Naive thymus-derived CD4-positive, alpha-beta T cell (primary cell): ENCODE measurements at regions of chr18 and their contacts with region 1.

Region 1: DNA sequence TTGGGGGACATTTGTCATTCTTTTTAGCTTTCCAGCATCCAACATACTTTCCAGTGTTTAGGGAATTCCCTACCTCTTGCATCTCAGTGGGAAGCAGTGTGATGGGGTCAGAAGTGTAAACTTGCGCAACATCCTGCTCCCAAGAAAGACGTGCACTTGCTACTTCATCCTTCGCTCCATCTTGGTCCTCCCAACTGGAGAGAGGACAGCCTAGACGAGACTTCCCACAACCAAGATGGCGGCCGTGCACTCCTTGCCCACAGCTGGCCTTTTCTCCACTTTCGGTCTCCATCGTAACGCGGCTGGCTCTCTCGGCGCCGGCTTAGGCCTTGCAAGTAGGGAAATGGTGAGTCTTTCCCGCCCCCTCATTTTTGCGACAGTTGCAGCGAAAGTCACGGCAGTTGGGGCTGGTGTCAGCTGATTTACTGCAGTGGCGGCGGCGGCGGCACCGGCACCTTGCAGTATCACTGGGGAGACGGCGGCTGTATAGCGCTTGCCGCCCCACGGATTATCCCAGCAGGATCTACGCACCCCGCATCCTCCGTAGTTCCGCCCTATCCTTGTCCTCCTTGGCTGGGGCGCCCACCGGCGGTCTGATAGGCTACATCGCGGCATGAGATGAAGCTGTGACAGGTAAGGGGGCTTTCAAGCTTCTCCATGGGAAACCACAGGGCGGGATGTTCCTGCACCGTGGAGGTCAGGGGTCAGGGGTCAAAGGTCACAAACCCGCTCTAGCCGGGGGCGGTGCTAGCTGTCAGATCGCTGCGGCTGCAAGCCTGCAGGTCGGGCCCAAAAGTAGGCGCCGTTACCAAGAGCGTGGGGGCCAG is at the start of gene WDR7:
- DNase-seq: peak; percentile 76 to 97 (median 95)
- ATAC-seq: peak; percentile 93
- H3K4me3 ChIP-seq: peak within 1 kb of the TSS; percentile 94
- H3K4me3 Mint-ChIP-seq: peak within 1 kb of the TSS; percentile 90 to 97 (median 95)
- H3K27ac ChIP-seq: peak within 1 kb of the TSS; percentile 75
- H3K27ac Mint-ChIP-seq: peak within 1 kb of the TSS; percentile 90 to 98 (median 95)
- H3K4me1 ChIP-seq: peaks cover 19 to 27% of the 10 kb centered on the region in 2 donors
- H3K4me1 Mint-ChIP-seq: peaks cover 32 to 70% (median 56%) of the 10 kb centered on the region in 7 donors
- H3K27me3 ChIP-seq: no peaks in the 10 kb centered on the region
- H3K27me3 Mint-ChIP-seq: no peaks in the 10 kb centered on the region
- total RNA-seq, gene WDR7: 44.2 to 59.8 (median 51.6) TPM

Region 2: GRCh38 chr18:55589625-55590291 is 1061.4 kb before region 1 on chr18:
- CTCF ChIA-PET with region 1: no interaction called
- POLR2A ChIA-PET with region 1: interaction called, 3 read pairs
- intact Hi-C with region 1: loop called (anchors 5 kb)
- DNase-seq: peak; percentile 61 to 89 (median 77)
- ATAC-seq: peak; percentile 97
- H3K4me3 ChIP-seq: peak overlapping the region; percentile 25
- H3K4me3 Mint-ChIP-seq: peak overlapping the region; percentile 82 to 94 (median 89)
- H3K27ac ChIP-seq: peak overlapping the region; percentile 53
- H3K27ac Mint-ChIP-seq: peak overlapping the region; percentile 25 to 86 (median 75)
- H3K4me1 ChIP-seq: no peaks in the 10 kb centered on the region
- H3K4me1 Mint-ChIP-seq: peaks cover 12 to 42% (median 36%) of the 10 kb centered on the region in 7 donors
- H3K27me3 ChIP-seq: peaks cover 0 to 8% of the 10 kb centered on the region in 2 donors
- H3K27me3 Mint-ChIP-seq: peaks cover 38 to 70% (median 48%) of the 10 kb centered on the region in 5 donors

Region 3: DNA sequence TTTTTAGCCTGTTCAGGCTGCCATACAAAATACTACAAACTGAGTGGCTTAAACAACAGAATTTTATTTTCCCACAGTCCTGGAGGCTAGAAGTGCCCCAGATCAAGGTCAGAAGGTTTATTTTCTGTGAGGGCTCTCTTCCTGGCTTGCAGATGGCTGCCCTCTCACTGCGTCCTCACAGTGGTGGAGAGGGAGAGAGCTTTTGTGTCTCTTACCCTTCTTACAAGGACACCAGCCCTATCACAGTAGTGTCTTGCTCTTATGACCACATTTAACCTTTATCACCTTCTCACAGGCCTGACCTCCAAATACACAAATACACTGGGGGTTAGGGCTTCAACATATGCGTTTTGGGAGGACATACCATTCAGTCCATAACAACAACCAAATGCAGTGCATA is 11.7 kb after region 1 on chr18:
- CTCF ChIA-PET with region 1: interaction called, 4 read pairs
- POLR2A ChIA-PET with region 1: interaction called, 3 read pairs
- intact Hi-C with region 1: loop called in 1 of 2 experiments (anchors 2 kb)
- DNase-seq: no peak
- ATAC-seq: no peak
- H3K4me3 ChIP-seq: no peak overlapping the region
- H3K4me3 Mint-ChIP-seq: no peak overlapping the region
- H3K27ac ChIP-seq: no peak overlapping the region
- H3K27ac Mint-ChIP-seq: no peak overlapping the region
- H3K4me1 ChIP-seq: no peaks in the 10 kb centered on the region
- H3K4me1 Mint-ChIP-seq: peaks cover 19 to 78% (median 66%) of the 10 kb centered on the region in 7 donors
- H3K27me3 ChIP-seq: no peaks in the 10 kb centered on the region
- H3K27me3 Mint-ChIP-seq: no peaks in the 10 kb centered on the region

Region 4: GRCh38 chr18:56709463-56709862 is 58.3 kb after region 1 on chr18:
- CTCF ChIA-PET with region 1: interaction called, 5 read pairs
- POLR2A ChIA-PET with region 1: no interaction called
- intact Hi-C with region 1: loop called (anchors 1 kb)
- DNase-seq: peak in 7 of 9 donors; percentile 18 to 56 (median 48)
- ATAC-seq: peak; percentile 100
- H3K4me3 ChIP-seq: no peak overlapping the region
- H3K4me3 Mint-ChIP-seq: no peak overlapping the region
- H3K27ac ChIP-seq: no peak overlapping the region
- H3K27ac Mint-ChIP-seq: no peak overlapping the region
- H3K4me1 ChIP-seq: no peaks in the 10 kb centered on the region
- H3K4me1 Mint-ChIP-seq: peaks cover 0 to 13% (median 4%) of the 10 kb centered on the region in 7 donors
- H3K27me3 ChIP-seq: no peaks in the 10 kb centered on the region
- H3K27me3 Mint-ChIP-seq: no peaks in the 10 kb centered on the region

Region 5: GRCh38 chr18:56869189-56869777 is 218.1 kb after region 1 on chr18:
- CTCF ChIA-PET with region 1: no interaction called
- POLR2A ChIA-PET with region 1: no interaction called
- intact Hi-C with region 1: no loop called
- DNase-seq: peak in 5 of 9 donors; percentile 10 to 27 (median 19)
- ATAC-seq: peak; percentile 75
- H3K4me3 ChIP-seq: no peak overlapping the region
- H3K4me3 Mint-ChIP-seq: no peak overlapping the region
- H3K27ac ChIP-seq: no peak overlapping the region
- H3K27ac Mint-ChIP-seq: no peak overlapping the region
- H3K4me1 ChIP-seq: peaks cover 0 to 14% of the 10 kb centered on the region in 2 donors
- H3K4me1 Mint-ChIP-seq: peaks cover 7 to 28% (median 19%) of the 10 kb centered on the region in 7 donors
- H3K27me3 ChIP-seq: no peaks in the 10 kb centered on the region
- H3K27me3 Mint-ChIP-seq: no peaks in the 10 kb centered on the region

Region 6: DNA sequence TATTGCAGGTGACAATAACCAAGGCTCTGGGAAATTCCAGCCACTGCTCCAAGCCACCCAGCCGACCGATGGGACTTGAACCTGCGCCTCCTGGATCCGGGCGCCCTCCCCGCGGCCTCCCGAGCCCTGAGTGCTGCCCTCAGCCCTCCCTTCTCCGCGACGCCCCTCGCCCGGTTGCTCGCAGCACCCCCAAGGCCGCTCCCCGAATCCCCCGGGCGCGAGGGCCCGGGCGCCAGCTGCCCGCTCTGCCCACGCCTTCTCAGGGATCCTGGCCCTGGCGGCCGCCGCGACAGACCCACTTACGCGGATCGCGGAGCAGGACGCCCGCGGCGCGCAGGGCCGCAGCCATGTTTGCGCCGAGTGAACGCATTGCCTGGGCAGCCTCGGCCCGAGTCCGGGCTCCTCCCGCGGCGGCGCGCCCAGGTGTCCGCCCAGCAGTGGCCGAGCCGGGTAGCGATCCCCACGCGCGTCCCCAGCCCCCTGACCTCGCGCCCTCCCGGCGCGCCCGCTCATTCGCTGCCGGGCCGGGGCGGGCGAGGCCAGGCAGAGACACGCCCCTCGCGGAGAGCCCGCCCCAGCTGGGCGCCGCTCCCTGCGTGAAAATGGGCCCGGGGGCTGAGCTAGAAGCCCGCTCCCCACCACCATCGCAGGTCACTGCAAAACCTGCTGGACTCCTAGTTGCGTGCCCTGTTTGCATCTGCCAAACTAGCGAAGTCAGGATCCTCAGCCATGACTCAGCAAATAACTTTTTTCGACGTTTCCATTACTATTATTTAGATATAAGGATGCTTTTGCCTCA is 935.3 kb after region 1 on chr18 and contains the start of gene FECH:
- CTCF ChIA-PET with region 1: no interaction called
- POLR2A ChIA-PET with region 1: no interaction called
- intact Hi-C with region 1: loop called (anchors 1 to 5 kb)
- DNase-seq: peak; percentile 59 to 81 (median 73)
- ATAC-seq: peak; percentile 98
- H3K4me3 ChIP-seq: peak within 1 kb of the TSS; percentile 61
- H3K4me3 Mint-ChIP-seq: peak within 1 kb of the TSS; percentile 81 to 95 (median 89)
- H3K27ac ChIP-seq: peak within 1 kb of the TSS; percentile 75
- H3K27ac Mint-ChIP-seq: peak within 1 kb of the TSS; percentile 65 to 90 (median 83)
- H3K4me1 ChIP-seq: peaks cover 9 to 11% of the 10 kb centered on the region in 2 donors
- H3K4me1 Mint-ChIP-seq: peaks cover 10 to 35% (median 23%) of the 10 kb centered on the region in 7 donors
- H3K27me3 ChIP-seq: no peaks in the 10 kb centered on the region
- H3K27me3 Mint-ChIP-seq: no peaks in the 10 kb centered on the region
- total RNA-seq, gene FECH: 11.7 to 15.3 (median 13.5) TPM

Region 7: DNA sequence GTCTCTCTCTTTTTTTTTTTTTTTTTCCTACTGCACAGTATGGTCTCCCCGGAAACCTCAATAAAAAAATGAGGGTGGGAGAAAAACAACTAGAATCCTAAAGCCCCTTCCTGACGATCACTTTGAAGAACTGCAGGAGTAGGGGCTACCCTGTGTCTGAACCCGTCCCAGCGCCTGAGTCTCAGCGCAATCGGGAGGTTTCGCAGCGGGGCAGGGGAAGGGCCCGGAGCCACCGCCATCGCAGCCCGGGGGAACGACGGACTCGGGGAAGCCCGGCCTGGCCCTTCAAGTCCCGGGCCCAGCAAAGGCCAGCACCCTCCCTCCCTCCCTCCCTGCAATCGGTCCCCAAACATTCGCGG is 970.1 kb after region 1 on chr18:
- CTCF ChIA-PET with region 1: no interaction called
- POLR2A ChIA-PET with region 1: interaction called, 5 read pairs
- intact Hi-C with region 1: loop called (anchors 1 kb)
- DNase-seq: no peak
- ATAC-seq: peak; percentile 4
- H3K4me3 ChIP-seq: peak overlapping the region; percentile 84
- H3K4me3 Mint-ChIP-seq: peak overlapping the region; percentile 89 to 99 (median 96)
- H3K27ac ChIP-seq: peak overlapping the region; percentile 85
- H3K27ac Mint-ChIP-seq: peak overlapping the region; percentile 93 to 99 (median 98)
- H3K4me1 ChIP-seq: peaks cover 13 to 19% of the 10 kb centered on the region in 2 donors
- H3K4me1 Mint-ChIP-seq: peaks cover 9 to 44% (median 34%) of the 10 kb centered on the region in 7 donors
- H3K27me3 ChIP-seq: no peaks in the 10 kb centered on the region
- H3K27me3 Mint-ChIP-seq: no peaks in the 10 kb centered on the region

Region 8: DNA sequence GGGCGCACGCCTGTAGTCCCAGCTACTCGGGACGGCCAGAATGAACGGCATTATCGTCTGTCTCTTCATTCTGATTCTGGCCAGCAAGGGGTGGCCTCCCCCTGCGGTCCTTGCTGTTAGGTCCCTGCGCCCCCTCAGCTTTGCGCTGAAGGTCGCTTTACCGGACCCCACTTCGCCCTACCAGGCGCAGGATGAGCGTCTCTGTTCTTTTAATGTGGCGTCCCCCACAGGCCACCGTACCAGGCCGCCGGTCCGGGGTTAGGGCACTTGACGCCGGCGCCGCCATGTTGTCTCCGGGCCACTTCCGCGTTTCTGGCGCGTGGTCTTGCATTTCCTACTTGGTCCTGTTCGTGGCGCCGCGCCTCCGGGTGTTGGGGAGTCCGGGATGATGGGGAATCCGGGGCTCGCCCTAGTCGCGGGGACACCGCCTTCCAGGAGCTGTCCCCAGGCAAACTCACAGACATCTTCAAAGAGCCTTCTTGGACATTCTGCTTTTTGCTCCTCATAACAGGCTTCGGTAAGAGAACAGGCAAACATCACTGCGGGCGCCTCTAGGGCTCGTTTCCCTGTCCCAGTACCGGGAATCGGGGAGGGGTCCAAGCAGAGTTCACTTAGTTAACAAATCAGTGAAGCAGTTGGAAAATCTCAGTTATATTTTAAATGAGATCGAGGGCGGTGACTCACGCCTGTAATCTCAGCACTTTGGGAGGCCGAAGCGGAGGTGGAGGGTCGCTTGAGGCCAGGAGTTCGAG is 979.0 kb after region 1 on chr18:
- CTCF ChIA-PET with region 1: no interaction called
- POLR2A ChIA-PET with region 1: no interaction called
- intact Hi-C with region 1: loop called (anchors 2 kb)
- DNase-seq: peak; percentile 89 to 95 (median 93)
- ATAC-seq: peak; percentile 99
- H3K4me3 ChIP-seq: peak overlapping the region; percentile 88
- H3K4me3 Mint-ChIP-seq: peak overlapping the region; percentile 88 to 98 (median 96)
- H3K27ac ChIP-seq: peak overlapping the region; percentile 79
- H3K27ac Mint-ChIP-seq: peak overlapping the region; percentile 84 to 99 (median 97)
- H3K4me1 ChIP-seq: peaks cover 10 to 11% of the 10 kb centered on the region in 2 donors
- H3K4me1 Mint-ChIP-seq: peaks cover 9 to 23% (median 20%) of the 10 kb centered on the region in 7 donors
- H3K27me3 ChIP-seq: no peaks in the 10 kb centered on the region
- H3K27me3 Mint-ChIP-seq: no peaks in the 10 kb centered on the region